ENCODE measurements at regions of chr1 and their contacts with region 1.

Region 1: GRCh38 chr1:40143891-40144575 is 17.2 kb upstream of the RLF start:
- DNase-seq: peak; percentile 50 to 73 (median 69)
- H3K4me3 ChIP-seq: no peak overlapping the region
- H3K4me3 Mint-ChIP-seq: no peak overlapping the region
- H3K27ac ChIP-seq: no peak overlapping the region
- H3K27ac Mint-ChIP-seq: peak overlapping the region in 1 of 7 donors; percentile 64
- H3K4me1 ChIP-seq: peaks cover 3 to 8% of the 10 kb centered on the region in 2 donors
- H3K4me1 Mint-ChIP-seq: peaks cover 16% of the 10 kb centered on the region
- H3K27me3 ChIP-seq: peaks cover 3 to 6% of the 10 kb centered on the region in 2 donors
- H3K27me3 Mint-ChIP-seq: peaks cover 4 to 11% (median 7%) of the 10 kb centered on the region in 3 donors
- CTCF ChIP-seq: peak; percentile 78

Region 2: DNA sequence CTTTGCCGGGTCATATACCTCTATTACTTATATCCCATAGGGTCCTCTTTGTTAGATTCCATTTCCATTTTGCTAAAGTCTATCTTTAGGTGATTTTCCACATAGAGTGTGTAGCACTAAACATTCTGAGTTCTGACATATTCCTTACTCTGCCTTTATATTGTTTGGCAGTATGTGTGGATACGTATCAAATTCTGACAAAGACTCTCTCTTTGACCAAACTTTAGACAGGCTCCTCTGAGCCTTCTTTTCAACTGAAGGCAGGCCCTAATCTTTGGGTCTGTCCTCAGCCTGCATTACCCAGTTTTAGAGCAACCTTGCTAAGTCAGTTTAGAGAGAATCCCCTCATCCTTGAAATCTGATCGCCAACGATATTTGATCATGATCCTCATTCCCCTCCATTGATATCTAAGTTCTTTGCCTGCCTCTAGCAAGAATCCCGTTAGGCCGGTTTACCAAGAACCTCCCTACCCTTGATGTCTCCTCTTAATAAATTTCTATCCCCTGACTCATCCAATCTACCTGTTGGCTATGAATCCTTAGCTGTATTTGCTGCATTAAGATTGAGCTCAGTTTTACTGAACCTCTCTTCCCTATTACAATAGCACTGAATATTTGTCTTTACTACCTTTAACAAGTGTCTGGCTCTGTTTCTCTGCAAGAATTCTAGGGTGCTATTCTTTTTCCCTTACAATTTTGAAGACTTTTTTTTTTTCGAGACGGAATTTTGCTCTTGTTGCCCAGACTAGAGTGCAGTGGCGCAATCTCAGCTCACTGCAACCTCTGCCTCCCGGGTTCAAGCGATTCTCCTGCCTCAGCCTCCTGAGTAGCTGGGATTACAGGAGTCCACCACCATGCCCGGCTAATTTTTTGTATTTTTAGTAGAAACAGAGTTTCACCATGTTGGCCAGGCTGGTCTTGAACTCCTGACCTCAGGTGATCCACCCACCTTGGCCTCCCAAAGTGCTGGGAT is 36.5 kb before region 1 on chr1:
- intact Hi-C with region 1: no loop called
- DNase-seq: no peak
- H3K4me3 ChIP-seq: no peak overlapping the region
- H3K4me3 Mint-ChIP-seq: no peak overlapping the region
- H3K27ac ChIP-seq: no peak overlapping the region
- H3K27ac Mint-ChIP-seq: no peak overlapping the region
- H3K4me1 ChIP-seq: no peaks in the 10 kb centered on the region
- H3K4me1 Mint-ChIP-seq: no peaks in the 10 kb centered on the region
- H3K27me3 ChIP-seq: no peaks in the 10 kb centered on the region
- H3K27me3 Mint-ChIP-seq: peaks cover 0 to 3% (median 3%) of the 10 kb centered on the region in 3 donors
- CTCF ChIP-seq: no peak

Region 3: DNA sequence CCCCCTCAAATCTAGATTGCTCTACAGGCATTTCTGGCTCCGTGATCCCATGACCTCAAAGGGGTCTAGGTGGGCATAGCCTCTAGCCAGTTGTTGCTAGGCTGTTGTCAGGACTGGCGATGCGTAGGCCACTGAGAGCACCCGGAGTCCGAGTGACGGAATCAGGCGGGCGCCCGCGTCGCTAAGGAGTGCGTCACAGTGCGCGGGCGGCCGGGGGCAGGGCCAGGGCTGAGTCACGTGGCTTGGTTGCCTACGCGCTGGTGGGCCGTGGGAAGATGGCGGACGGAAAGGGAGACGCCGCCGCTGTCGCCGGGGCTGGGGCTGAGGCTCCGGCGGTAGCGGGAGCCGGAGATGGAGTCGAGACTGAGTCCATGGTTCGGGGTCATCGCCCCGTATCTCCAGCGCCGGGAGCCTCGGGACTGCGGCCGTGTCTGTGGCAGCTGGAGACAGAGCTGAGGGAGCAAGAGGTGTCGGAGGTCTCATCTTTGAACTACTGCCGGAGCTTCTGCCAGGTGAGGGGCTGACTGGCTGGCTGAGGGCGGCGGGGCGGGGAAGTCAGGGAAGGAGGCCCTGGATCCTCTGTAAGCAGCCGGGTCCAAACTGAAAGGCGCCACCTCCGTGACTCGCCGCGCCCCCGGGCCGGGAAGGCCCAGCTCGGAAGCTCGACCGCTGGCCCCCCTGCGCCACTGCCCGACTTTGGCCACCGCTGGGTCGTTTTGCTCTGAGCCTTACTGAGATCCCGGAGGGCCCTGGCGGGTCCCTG is 17.3 kb after region 1 on chr1 and contains the start of gene RLF:
- intact Hi-C with region 1: no loop called
- DNase-seq: peak; percentile 92 to 96 (median 93)
- H3K4me3 ChIP-seq: peak within 1 kb of the TSS; percentile 64 to 94 (median 93)
- H3K4me3 Mint-ChIP-seq: no peak within 1 kb of the TSS
- H3K27ac ChIP-seq: peak within 1 kb of the TSS; percentile 91 to 96
- H3K27ac Mint-ChIP-seq: no peak within 1 kb of the TSS
- H3K4me1 ChIP-seq: peaks cover 21 to 30% of the 10 kb centered on the region in 2 donors
- H3K4me1 Mint-ChIP-seq: peaks cover 12% of the 10 kb centered on the region
- H3K27me3 ChIP-seq: no peaks in the 10 kb centered on the region
- H3K27me3 Mint-ChIP-seq: peaks cover 0 to 5% (median 0%) of the 10 kb centered on the region in 3 donors
- CTCF ChIP-seq: no peak
- polyA plus RNA-seq, gene RLF: 3.0 to 9.2 (median 6.2) TPM

Region 4: DNA sequence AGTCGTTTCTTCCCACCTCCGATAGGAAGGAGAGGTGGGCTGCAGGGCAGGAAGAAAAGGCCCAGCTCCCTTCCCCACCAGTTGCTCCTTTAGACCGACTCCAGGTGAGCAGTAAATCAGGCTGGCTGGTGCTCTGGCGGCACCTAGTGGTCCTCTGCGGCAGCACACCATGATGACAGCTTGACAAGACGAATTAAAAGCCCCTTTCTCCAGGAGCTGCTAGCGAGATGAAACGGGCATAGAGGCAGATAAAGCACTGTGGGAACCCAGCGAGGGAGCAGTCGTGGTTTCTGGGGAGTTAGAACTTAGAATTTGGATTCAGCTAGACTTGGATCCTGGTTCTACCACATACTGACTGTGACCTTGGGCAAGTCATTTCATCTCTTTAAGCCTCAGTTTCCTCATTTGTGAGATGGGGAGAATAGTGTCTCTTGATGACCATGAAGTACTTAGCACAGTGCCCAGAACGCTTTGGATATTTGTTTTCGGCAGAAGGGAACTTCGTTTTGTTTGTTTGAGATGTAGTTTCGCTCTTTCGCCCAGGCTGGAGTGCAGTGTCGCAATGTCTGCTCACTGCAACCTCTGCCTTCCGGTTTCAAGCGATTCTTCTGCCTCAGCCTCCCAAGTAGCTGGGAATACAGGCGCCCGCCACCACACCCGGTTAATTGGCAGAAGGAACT is 194.9 kb after region 1 on chr1:
- intact Hi-C with region 1: loop called in 1 of 2 experiments (anchors 5 kb)
- DNase-seq: peak; percentile 68 to 79 (median 79)
- H3K4me3 ChIP-seq: peak overlapping the region; percentile 29 to 75 (median 55)
- H3K4me3 Mint-ChIP-seq: peak overlapping the region; percentile 78 to 92
- H3K27ac ChIP-seq: peak overlapping the region; percentile 63 to 93
- H3K27ac Mint-ChIP-seq: peak overlapping the region; percentile 91 to 98 (median 96)
- H3K4me1 ChIP-seq: peaks cover 55 to 56% of the 10 kb centered on the region in 2 donors
- H3K4me1 Mint-ChIP-seq: peaks cover 55% of the 10 kb centered on the region
- H3K27me3 ChIP-seq: no peaks in the 10 kb centered on the region
- H3K27me3 Mint-ChIP-seq: peaks cover 0 to 11% (median 4%) of the 10 kb centered on the region in 3 donors
- CTCF ChIP-seq: peak; percentile 100

Region 5: GRCh38 chr1:40352126-40352525 is 208.1 kb after region 1 on chr1:
- intact Hi-C with region 1: no loop called
- DNase-seq: peak; percentile 59 to 79 (median 68)
- H3K4me3 ChIP-seq: peak overlapping the region in 1 of 3 experiments; percentile 55
- H3K4me3 Mint-ChIP-seq: peak overlapping the region in 1 of 2 donors; percentile 60
- H3K27ac ChIP-seq: peak overlapping the region; percentile 82 to 89
- H3K27ac Mint-ChIP-seq: peak overlapping the region; percentile 65 to 89 (median 85)
- H3K4me1 ChIP-seq: peaks cover 64 to 79% of the 10 kb centered on the region in 2 donors
- H3K4me1 Mint-ChIP-seq: peaks cover 74% of the 10 kb centered on the region
- H3K27me3 ChIP-seq: no peaks in the 10 kb centered on the region
- H3K27me3 Mint-ChIP-seq: no peaks in the 10 kb centered on the region
- CTCF ChIP-seq: no peak

Region 6: DNA sequence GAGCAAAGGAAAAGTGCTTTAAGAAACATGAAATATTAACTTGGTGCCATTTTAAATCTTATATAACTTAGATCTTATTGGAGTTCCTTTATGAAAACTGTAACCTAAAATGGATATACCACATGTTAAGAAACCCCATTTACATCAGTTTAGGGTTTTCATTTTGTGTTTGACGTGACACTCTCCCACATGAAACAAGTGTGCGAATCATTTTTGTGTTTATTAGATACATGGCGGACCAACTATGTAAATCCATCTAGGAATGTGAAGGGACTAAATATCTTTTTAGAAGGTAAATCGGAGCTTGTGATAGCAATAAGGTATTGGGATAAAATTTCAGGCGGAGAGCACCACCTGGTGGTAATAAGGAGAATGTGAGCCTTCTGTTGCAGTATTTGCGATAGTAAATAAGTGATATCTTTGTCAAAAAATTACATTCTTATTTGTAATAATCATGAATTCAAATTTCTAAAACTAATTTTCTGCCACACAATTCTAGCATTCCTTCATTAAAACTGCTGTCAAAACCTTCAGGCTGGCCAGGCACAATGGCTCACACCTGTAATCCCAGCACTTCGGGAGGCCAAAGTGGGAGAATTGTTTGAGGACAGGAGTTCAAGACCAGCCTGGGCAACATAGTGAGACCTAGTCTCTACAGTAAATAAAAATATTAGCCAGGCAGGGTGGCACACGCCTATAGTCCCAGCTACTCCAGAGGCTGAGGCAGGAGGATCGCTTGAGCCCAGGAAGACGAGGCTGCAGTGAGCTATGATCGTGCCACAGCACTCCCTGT is 260.8 kb after region 1 on chr1:
- intact Hi-C with region 1: loop called in 1 of 2 experiments (anchors 5 kb)
- DNase-seq: peak in 2 of 3 donors; percentile 63 to 74
- H3K4me3 ChIP-seq: peak overlapping the region in 1 of 3 experiments; percentile 16
- H3K4me3 Mint-ChIP-seq: no peak overlapping the region
- H3K27ac ChIP-seq: peak overlapping the region in 1 of 2 donors; percentile 71
- H3K27ac Mint-ChIP-seq: peak overlapping the region in 5 of 7 donors; percentile 9 to 94 (median 88)
- H3K4me1 ChIP-seq: peaks cover 39 to 48% of the 10 kb centered on the region in 2 donors
- H3K4me1 Mint-ChIP-seq: peaks cover 48% of the 10 kb centered on the region
- H3K27me3 ChIP-seq: no peaks in the 10 kb centered on the region
- H3K27me3 Mint-ChIP-seq: peaks cover 0 to 3% (median 0%) of the 10 kb centered on the region in 3 donors
- CTCF ChIP-seq: peak; percentile 89

Region 7: GRCh38 chr1:40438391-40439015 is 294.5 kb after region 1 on chr1:
- intact Hi-C with region 1: loop called in 1 of 2 experiments (anchors 10 kb)
- DNase-seq: peak in 2 of 3 donors; percentile 43 to 50
- H3K4me3 ChIP-seq: no peak overlapping the region
- H3K4me3 Mint-ChIP-seq: no peak overlapping the region
- H3K27ac ChIP-seq: no peak overlapping the region
- H3K27ac Mint-ChIP-seq: no peak overlapping the region
- H3K4me1 ChIP-seq: peaks cover 0 to 3% of the 10 kb centered on the region in 2 donors
- H3K4me1 Mint-ChIP-seq: peaks cover 3% of the 10 kb centered on the region
- H3K27me3 ChIP-seq: no peaks in the 10 kb centered on the region
- H3K27me3 Mint-ChIP-seq: no peaks in the 10 kb centered on the region
- CTCF ChIP-seq: peak; percentile 88

Measured in CD14-positive monocyte (primary cell).